ENCODE measurements at regions of chr14 and their contacts with region 1.

Region 1: GRCh38 chr14:24160850-24161804 is at the start of gene IRF9:
- DNase-seq: peak; percentile 98
- H3K4me3 ChIP-seq: peak within 1 kb of the TSS; percentile 55 to 77 (median 63)
- H3K27ac ChIP-seq: peak within 1 kb of the TSS; percentile 90 to 97 (median 92)
- H3K4me1 ChIP-seq: peaks cover 0 to 40% (median 28%) of the 10 kb centered on the region in 4 donors
- H3K27me3 ChIP-seq: no peaks in the 10 kb centered on the region
- CTCF ChIP-seq: peak; percentile 91 to 96 (median 94)
- EP300 ChIP-seq: peak in 2 of 4 donors; percentile 34 to 86
- POLR2A ChIP-seq: peak; percentile 25 to 48
- total RNA-seq, gene IRF9: 54.6 to 103 (median 56.1) TPM

Region 2: DNA sequence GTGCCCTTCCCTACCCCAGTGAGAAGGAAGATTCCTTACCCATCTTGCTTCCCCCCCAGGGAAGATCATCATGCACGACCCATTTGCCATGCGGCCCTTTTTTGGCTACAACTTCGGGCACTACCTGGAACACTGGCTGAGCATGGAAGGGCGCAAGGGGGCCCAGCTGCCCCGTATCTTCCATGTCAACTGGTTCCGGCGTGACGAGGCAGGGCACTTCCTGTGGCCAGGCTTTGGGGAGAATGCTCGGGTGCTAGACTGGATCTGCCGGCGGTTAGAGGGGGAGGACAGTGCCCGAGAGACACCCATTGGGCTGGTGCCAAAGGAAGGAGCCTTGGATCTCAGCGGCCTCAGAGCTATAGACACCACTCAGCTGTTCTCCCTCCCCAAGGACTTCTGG is 57.7 kb before region 1 on chr14:
- intact Hi-C with region 1: no loop called
- DNase-seq: no peak
- H3K4me3 ChIP-seq: no peak overlapping the region
- H3K27ac ChIP-seq: no peak overlapping the region
- H3K4me1 ChIP-seq: peaks cover 0 to under 1% (median 0%) of the 10 kb centered on the region in 4 donors
- H3K27me3 ChIP-seq: no peaks in the 10 kb centered on the region
- CTCF ChIP-seq: no peak
- EP300 ChIP-seq: no peak
- POLR2A ChIP-seq: no peak

Region 3: GRCh38 chr14:24114536-24115450 is 46.3 kb before region 1 on chr14 and contains the starts of genes DCAF11 and NRL:
- intact Hi-C with region 1: loop called (anchors 1 kb)
- DNase-seq: peak; percentile 100
- H3K4me3 ChIP-seq: peak within 1 kb of the TSS; percentile 66 to 85 (median 74)
- H3K27ac ChIP-seq: peak within 1 kb of the TSS; percentile 95 to 99 (median 98)
- H3K4me1 ChIP-seq: peaks cover 0 to 19% (median 18%) of the 10 kb centered on the region in 4 donors
- H3K27me3 ChIP-seq: no peaks in the 10 kb centered on the region
- CTCF ChIP-seq: no peak
- EP300 ChIP-seq: peak in 3 of 4 donors; percentile 81 to 90 (median 89)
- POLR2A ChIP-seq: no peak
- total RNA-seq, gene DCAF11: 37.7 to 82.9 (median 54.8) TPM
- total RNA-seq, gene NRL: 0.71 to 2.2 (median 1.4) TPM

Region 4: GRCh38 chr14:24146978-24147760 is 14.0 kb before region 1 on chr14 and contains the start of gene RNF31:
- intact Hi-C with region 1: loop called (anchors 2 kb)
- DNase-seq: peak; percentile 100
- H3K4me3 ChIP-seq: peak within 1 kb of the TSS; percentile 58 to 98 (median 77)
- H3K27ac ChIP-seq: peak within 1 kb of the TSS; percentile 92 to 96 (median 95)
- H3K4me1 ChIP-seq: peaks cover 0 to 46% (median 35%) of the 10 kb centered on the region in 4 donors
- H3K27me3 ChIP-seq: no peaks in the 10 kb centered on the region
- CTCF ChIP-seq: no peak
- EP300 ChIP-seq: no peak
- POLR2A ChIP-seq: peak; percentile 32 to 70
- total RNA-seq, gene RNF31: 20.2 to 38.4 (median 29.7) TPM

Region 5: DNA sequence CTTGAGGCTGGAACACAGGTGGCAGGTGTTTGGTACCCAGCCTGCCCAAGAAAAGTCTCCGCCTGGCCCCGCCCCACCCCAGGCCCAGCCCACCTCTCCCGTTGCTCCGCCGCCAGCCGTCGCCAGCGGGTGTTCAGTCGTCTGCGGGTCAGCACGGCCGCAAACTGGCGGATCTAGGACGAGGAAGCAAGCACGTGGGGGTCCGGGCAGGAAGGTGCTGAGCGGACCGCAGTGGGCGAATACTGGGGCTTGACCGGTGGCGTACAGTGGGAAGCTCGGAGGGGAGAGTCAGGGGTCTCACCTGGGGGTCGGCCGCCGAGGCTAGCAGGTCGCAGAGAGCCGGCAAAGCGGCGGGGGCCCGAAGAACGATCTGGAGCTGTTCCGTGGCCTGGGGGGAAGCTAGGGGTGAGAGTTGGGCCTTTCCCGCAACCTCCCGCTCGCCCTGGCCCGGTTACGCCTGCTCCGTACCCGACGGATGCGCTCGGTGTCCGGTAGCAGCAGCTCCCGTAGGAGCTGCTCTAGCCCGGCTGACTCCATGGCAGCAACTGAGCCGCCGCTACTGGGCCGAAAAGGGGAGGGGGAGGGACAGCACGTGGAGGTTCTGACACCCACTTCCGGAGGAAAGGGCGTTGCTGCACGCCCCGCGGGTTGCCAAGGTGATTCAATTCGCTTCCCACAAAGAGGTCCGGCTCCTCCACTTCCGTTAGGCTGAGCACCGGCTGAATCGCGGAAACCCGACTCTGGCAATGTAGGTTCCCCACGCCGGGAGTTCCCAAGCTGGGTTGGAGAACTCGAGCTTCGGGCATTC is 27.3 kb after region 1 on chr14 and contains the start of gene IPO4:
- intact Hi-C with region 1: loop called (anchors 2 kb)
- DNase-seq: peak; percentile 99
- H3K4me3 ChIP-seq: peak within 1 kb of the TSS; percentile 48 to 67 (median 62)
- H3K27ac ChIP-seq: peak within 1 kb of the TSS; percentile 73 to 84 (median 76)
- H3K4me1 ChIP-seq: peaks cover 0 to 22% (median 19%) of the 10 kb centered on the region in 4 donors
- H3K27me3 ChIP-seq: no peaks in the 10 kb centered on the region
- CTCF ChIP-seq: no peak
- EP300 ChIP-seq: peak in 1 of 4 donors; percentile 78
- POLR2A ChIP-seq: peak in 1 of 2 donors; percentile 29
- total RNA-seq, gene IPO4: 11.0 to 37.1 (median 13.2) TPM

Region 6: GRCh38 chr14:24463017-24463883 is 302.1 kb after region 1 on chr14:
- intact Hi-C with region 1: no loop called
- DNase-seq: no peak
- H3K4me3 ChIP-seq: no peak overlapping the region
- H3K27ac ChIP-seq: no peak overlapping the region
- H3K4me1 ChIP-seq: no peaks in the 10 kb centered on the region
- H3K27me3 ChIP-seq: no peaks in the 10 kb centered on the region
- CTCF ChIP-seq: no peak
- EP300 ChIP-seq: no peak
- POLR2A ChIP-seq: no peak